Adrenal gland (tissue), 19 donors: ENCODE measurements at regions of chr16 and their contacts with region 1.

Region 1: DNA sequence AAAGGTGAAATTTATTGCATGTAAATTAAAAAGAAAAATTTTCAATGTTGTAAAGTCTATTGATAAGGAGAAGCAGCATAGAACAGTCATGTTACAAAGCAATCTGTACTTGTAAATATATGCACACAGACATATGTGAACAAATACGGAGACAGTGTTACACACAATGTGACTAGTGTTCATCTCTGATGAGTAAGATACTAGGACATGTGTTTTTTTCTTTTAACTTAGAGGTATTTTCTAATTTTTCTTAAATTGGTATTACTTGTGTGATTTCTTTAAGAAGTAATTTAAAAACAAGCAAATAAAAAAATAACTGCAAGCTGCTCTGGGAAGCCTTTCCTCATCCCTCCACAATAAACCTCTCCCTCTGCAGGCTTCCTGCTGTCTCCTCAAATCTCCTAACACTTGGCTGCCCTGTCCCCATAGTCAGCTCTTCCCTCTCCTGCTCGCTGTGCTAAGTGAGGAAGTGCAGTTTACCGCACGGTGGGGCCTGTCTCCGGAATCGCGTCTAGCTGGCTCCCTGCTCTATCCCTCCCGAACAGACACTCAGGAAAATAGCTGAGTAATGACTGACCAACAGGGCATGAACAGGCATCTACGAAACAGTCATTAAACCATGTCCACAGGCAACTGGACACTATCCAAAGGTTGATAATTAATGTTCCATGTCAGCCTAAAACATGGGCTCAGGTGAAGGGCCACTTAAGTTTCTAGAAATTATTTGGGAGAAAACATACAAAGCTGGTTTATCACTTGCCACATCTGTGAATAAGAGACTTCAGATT is 35.9 kb downstream of the CMTM4 start:
- DNase-seq: peak; percentile 47 to 85 (median 68)
- H3K4me3 ChIP-seq: no peak overlapping the region
- H3K27ac ChIP-seq: peak overlapping the region in 2 of 5 donors; percentile 59 to 64
- H3K4me1 ChIP-seq: peaks cover 0 to 30% of the 10 kb centered on the region in 2 donors
- H3K27me3 ChIP-seq: no peaks in the 10 kb centered on the region
- CTCF ChIP-seq: peak in 3 of 6 experiments; percentile 18 to 30 (median 29)
- POLR2A ChIP-seq: no peak

Region 2: DNA sequence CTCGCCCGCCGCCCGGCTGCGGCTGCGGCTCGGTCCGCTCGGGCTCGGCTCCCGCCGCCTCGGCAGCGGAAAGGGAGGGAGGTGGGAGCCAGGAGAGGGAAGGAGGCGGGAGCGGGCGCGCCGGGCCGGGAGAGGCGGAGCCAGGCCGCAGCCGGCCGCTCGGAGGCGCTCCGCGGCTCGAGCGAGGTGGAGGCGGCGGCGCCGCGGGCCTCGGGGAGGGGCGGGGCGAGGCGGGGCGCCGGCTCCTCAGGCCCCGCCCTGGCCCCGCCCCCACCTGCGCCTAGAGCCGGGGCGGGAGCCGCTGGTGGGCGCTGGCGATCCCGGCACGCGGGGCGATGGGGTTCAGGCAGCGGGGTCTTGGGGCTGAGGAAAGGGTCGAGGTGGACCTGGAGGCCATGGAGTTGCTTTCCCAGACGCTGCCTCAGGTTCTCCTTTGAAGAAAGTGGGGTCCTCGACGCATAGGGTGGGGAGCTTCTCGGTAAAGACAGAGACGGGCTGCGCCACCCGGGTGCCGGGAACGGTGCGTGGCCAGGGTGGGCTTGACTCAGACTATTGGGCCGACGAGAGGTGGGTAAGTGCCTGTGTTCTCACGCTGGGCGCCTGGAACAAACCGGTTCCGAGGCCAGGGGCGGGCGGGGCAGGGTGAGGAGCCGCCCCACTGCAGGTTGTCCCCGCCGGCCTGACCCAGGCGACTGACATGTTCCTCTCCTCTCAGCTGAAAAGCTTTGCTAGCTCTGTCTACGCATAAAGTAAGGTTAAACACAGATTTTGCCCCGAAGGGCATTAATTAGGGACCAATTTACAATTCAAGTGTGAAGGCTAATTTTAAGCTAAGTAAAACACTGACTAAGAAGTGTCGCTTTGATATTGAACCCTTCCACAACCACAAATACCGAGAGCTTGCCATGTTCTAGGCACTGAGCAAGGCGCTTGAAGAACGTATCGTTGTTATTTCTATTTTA is 36.3 kb after region 1 on chr16 and contains the start of gene CMTM4:
- intact Hi-C with region 1: loop called in 1 of 2 experiments (anchors 5 kb)
- DNase-seq: peak; percentile 82 to 90 (median 89)
- H3K4me3 ChIP-seq: peak within 1 kb of the TSS in 3 of 4 donors; percentile 33 to 86 (median 55)
- H3K27ac ChIP-seq: peak within 1 kb of the TSS in 3 of 5 donors; percentile 33 to 73 (median 47)
- H3K4me1 ChIP-seq: peaks cover 8 to 10% of the 10 kb centered on the region in 2 donors
- H3K27me3 ChIP-seq: no peaks in the 10 kb centered on the region
- CTCF ChIP-seq: peak in 1 of 6 experiments; percentile 20
- POLR2A ChIP-seq: peak in 1 of 2 donors; percentile 33
- total RNA-seq, gene CMTM4: 14.3 to 35.3 (median 20.9) TPM